ENCODE measurements at regions of chr6 and their contacts with region 1.

Region 1: GRCh38 chr6:4018172-4018905 is 60.6 kb downstream of the FAM217A start:
- DNase-seq: peak; percentile 92 to 99 (median 96)
- ATAC-seq: peak; percentile 70
- H3K4me3 ChIP-seq: peak overlapping the region; percentile 44 to 74
- H3K4me3 Mint-ChIP-seq: peak overlapping the region; percentile 93
- H3K27ac ChIP-seq: peak overlapping the region; percentile 90 to 91
- H3K27ac Mint-ChIP-seq: peak overlapping the region; percentile 99
- H3K4me1 ChIP-seq: peaks cover 57% of the 10 kb centered on the region
- H3K4me1 Mint-ChIP-seq: peaks cover 74% of the 10 kb centered on the region
- H3K27me3 ChIP-seq: no peaks in the 10 kb centered on the region
- H3K27me3 Mint-ChIP-seq: no peaks in the 10 kb centered on the region
- CTCF ChIP-seq: no peak

Region 2: DNA sequence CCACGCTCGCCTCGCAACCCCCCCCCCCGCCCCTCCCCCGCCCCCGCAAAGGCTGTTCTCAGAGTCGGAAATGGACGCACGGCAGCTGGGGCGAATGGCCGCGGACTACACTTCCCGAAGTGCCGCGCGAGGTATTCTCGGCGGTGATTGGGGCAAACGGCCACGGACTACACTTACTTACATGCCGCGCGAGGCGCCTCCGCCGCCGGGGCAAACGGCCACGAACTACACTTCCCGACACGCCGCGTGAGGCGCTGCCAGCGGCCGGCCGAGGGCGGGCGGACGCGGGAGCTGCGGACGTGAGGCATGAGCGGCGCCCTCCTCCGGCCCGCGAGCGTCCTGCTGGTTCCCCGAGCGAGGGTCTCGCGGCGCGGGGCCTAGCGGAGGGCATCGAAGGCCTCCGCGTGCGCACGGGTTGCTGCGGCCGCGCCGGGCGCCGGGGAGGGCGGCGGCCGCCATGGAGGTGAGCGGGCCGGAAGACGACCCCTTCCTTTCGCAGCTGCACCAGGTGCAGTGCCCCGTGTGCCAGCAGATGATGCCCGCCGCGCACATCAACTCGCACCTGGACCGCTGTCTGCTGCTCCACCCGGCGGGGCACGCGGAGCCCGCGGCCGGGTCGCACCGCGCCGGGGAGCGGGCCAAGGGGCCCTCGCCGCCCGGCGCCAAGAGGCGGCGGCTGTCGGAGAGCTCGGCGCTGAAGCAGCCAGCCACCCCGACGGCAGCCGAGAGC is 1253.0 kb before region 1 on chr6 and contains the start of gene WRNIP1:
- CTCF ChIA-PET with region 1: interaction called, 3 read pairs
- POLR2A ChIA-PET with region 1: no interaction called
- intact Hi-C with region 1: loop called in 1 of 2 experiments (anchors 2 kb)
- DNase-seq: peak; percentile 93 to 99 (median 96)
- ATAC-seq: peak; percentile 84
- H3K4me3 ChIP-seq: peak within 1 kb of the TSS; percentile 72 to 76
- H3K4me3 Mint-ChIP-seq: peak within 1 kb of the TSS; percentile 95
- H3K27ac ChIP-seq: peak within 1 kb of the TSS; percentile 88 to 97
- H3K27ac Mint-ChIP-seq: peak within 1 kb of the TSS; percentile 99
- H3K4me1 ChIP-seq: peaks cover 43% of the 10 kb centered on the region
- H3K4me1 Mint-ChIP-seq: peaks cover 47% of the 10 kb centered on the region
- H3K27me3 ChIP-seq: no peaks in the 10 kb centered on the region
- H3K27me3 Mint-ChIP-seq: no peaks in the 10 kb centered on the region
- CTCF ChIP-seq: peak; percentile 35
- total RNA-seq, gene WRNIP1: 21.3 to 23.0 TPM

Region 3: DNA sequence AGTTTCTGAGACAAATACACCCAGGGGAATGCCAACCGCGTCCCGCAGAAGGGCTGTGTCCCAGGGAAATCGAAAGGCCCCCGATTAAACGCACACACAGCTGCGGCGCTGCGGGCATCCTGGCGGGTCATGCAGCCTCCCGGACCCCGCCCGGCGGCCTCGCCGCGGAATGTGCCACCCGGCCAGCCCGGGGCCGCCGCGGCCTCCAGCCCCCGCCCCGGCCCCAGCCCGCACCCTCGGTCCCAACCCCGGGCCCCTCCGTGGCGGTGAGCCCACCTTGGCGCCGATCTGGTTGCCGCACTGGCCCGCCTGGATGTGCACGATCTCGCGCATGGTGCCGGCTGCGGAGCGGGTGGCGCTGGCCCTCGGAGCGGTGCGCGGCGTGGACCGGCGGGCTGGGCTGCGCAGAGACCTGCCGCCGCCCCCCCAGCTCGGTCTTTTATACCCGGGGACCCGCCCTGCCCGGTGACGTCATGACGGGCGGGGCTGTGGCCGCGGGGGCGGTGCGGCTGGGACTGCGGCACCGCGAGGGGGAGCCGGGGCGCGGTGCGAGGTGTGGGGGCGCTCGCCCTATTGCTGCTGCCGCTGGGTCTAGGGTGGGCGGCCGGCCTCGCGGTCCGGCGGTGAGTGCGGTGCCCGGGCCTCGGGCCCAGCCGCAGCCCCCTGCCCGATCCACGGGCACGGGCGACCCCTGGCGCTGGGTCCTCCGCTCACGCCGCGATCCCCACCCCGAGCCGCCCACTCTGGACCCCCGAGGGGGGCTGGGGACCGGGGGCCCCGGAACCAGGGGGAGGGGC is 861.0 kb before region 1 on chr6 and contains the start of gene TUBB2A:
- CTCF ChIA-PET with region 1: interaction called, 3 read pairs
- POLR2A ChIA-PET with region 1: no interaction called
- intact Hi-C with region 1: loop called (anchors 1 kb)
- DNase-seq: peak; percentile 77 to 94 (median 88)
- ATAC-seq: peak; percentile 61
- H3K4me3 ChIP-seq: peak within 1 kb of the TSS; percentile 65
- H3K4me3 Mint-ChIP-seq: peak within 1 kb of the TSS; percentile 92
- H3K27ac ChIP-seq: peak within 1 kb of the TSS; percentile 73 to 84
- H3K27ac Mint-ChIP-seq: peak within 1 kb of the TSS; percentile 91
- H3K4me1 ChIP-seq: peaks cover 29% of the 10 kb centered on the region
- H3K4me1 Mint-ChIP-seq: peaks cover 36% of the 10 kb centered on the region
- H3K27me3 ChIP-seq: no peaks in the 10 kb centered on the region
- H3K27me3 Mint-ChIP-seq: peaks cover 2% of the 10 kb centered on the region
- CTCF ChIP-seq: peak; percentile 65
- total RNA-seq, gene TUBB2A: 61.4 to 63.9 TPM

Region 4: DNA sequence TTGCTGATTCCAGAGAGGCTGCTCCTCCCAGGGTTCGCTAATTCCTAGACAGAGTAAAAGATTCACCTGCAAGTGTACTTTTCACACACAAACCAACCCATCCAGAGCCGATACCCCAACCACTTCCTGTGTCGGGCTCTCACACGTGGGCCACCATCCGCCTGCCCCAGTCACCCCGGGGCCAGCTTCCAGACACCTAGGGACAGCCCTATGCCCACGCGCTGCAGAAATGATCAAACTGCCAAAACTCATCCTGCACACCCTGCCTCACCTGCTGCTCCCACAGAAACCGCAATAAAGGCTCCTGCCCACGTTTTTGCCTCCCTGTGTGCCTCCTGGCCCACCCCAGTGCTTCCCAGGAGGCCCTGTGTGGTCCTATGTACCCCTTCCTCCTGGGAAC is 700.1 kb before region 1 on chr6:
- CTCF ChIA-PET with region 1: no interaction called
- POLR2A ChIA-PET with region 1: no interaction called
- intact Hi-C with region 1: no loop called
- DNase-seq: peak in 8 of 9 experiments; percentile 14 to 69 (median 33)
- ATAC-seq: peak; percentile 71
- H3K4me3 ChIP-seq: no peak overlapping the region
- H3K4me3 Mint-ChIP-seq: peak overlapping the region; percentile 47
- H3K27ac ChIP-seq: no peak overlapping the region
- H3K27ac Mint-ChIP-seq: no peak overlapping the region
- H3K4me1 ChIP-seq: peaks cover 19% of the 10 kb centered on the region
- H3K4me1 Mint-ChIP-seq: peaks cover 23% of the 10 kb centered on the region
- H3K27me3 ChIP-seq: peaks cover 0 to 4% of the 10 kb centered on the region in 2 experiments
- H3K27me3 Mint-ChIP-seq: peaks cover 14% of the 10 kb centered on the region
- CTCF ChIP-seq: no peak

Region 5: DNA sequence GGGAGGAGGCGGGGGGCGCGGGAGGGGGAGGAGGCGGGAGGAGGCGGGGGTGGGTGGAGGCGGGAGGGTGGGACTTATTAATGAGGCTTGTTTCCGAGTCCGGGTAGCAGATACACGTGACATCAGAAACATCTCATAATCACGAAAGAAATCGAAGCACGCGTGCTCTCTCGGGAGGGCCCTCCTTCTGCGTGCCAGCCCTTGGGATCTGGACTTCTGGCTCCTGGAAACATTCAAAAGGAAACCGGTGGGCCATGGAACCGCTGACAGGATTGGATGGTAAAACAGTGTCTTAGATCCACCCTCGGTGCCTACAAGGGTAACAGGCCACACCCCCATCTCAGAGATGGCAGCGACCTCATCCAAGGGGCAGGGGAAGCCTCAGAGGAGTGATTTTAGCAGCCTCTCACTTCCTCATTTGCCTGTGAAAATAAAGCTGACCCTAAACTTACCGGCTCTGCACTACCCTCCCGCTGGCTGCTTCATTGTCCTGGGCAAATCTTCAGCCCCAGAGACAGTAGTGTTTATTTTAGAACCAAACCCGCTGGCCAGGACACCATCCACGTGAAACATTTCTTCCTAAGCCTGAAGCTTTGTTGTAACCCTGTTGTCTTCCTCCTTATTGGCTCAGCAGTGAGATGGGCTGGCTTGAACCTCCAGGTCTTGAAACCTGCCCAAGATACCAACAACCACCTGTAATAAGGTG is 662.1 kb before region 1 on chr6:
- CTCF ChIA-PET with region 1: no interaction called
- POLR2A ChIA-PET with region 1: no interaction called
- intact Hi-C with region 1: loop called (anchors 5 to 10 kb)
- DNase-seq: peak; percentile 35 to 90 (median 66)
- ATAC-seq: peak; percentile 87
- H3K4me3 ChIP-seq: peak overlapping the region; percentile 51 to 58
- H3K4me3 Mint-ChIP-seq: peak overlapping the region; percentile 81
- H3K27ac ChIP-seq: peak overlapping the region; percentile 48 to 79
- H3K27ac Mint-ChIP-seq: peak overlapping the region; percentile 90
- H3K4me1 ChIP-seq: peaks cover 27% of the 10 kb centered on the region
- H3K4me1 Mint-ChIP-seq: peaks cover 33% of the 10 kb centered on the region
- H3K27me3 ChIP-seq: no peaks in the 10 kb centered on the region
- H3K27me3 Mint-ChIP-seq: no peaks in the 10 kb centered on the region
- CTCF ChIP-seq: no peak

Region 6: DNA sequence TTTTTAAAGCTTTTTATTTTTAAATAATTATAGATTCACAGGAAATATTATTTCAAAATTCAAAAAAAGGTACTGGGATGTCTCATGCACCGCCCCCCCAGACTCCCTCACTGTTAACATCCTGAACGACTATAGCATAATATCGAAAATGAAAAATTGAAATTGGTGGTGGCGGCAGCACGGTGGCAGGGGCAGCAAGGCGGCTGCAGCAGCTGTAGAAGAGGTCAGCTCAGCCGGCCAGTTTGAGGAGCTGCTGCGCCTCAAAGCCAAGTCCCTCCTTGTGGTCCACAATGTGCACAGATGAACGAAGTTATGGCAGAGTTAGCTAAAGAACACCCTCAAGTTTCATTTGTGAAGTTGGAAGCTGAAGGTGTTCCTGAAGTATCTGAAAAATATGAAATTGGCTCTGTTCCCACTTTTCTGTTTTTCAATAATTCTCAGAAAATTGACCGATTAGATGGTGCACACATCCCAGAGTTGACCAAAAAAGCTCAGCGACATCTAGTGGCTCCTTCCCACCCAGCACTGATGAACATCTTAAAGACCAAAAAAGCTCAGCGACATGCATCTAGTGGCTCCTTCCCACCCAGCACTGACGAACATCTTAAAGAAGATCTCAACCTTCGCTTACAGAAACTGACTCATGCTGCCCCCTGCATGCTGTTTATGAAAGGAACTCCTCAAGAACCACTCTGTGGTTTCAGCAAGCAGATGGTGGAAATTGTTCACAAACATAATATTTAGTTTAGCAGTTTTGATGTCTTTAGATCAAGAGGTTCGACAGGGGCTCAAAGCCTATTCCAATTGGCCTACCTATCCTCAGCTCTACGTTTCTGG is 40.2 kb before region 1 on chr6:
- CTCF ChIA-PET with region 1: interaction called, 10 read pairs
- POLR2A ChIA-PET with region 1: interaction called, 9 read pairs
- intact Hi-C with region 1: loop called in 1 of 2 experiments (anchors 5 kb)
- DNase-seq: peak; percentile 10 to 78 (median 44)
- ATAC-seq: peak; percentile 99
- H3K4me3 ChIP-seq: peak overlapping the region in 1 of 2 experiments; percentile 6
- H3K4me3 Mint-ChIP-seq: peak overlapping the region; percentile 47
- H3K27ac ChIP-seq: no peak overlapping the region
- H3K27ac Mint-ChIP-seq: no peak overlapping the region
- H3K4me1 ChIP-seq: peaks cover 7% of the 10 kb centered on the region
- H3K4me1 Mint-ChIP-seq: peaks cover 11% of the 10 kb centered on the region
- H3K27me3 ChIP-seq: no peaks in the 10 kb centered on the region
- H3K27me3 Mint-ChIP-seq: no peaks in the 10 kb centered on the region
- CTCF ChIP-seq: peak; percentile 64

Region 7: GRCh38 chr6:4775584-4776494 is 757.5 kb after region 1 on chr6 and contains the start of gene CDYL:
- CTCF ChIA-PET with region 1: no interaction called
- POLR2A ChIA-PET with region 1: no interaction called
- intact Hi-C with region 1: loop called (anchors 5 to 10 kb)
- DNase-seq: peak; percentile 76 to 94 (median 89)
- ATAC-seq: peak; percentile 75
- H3K4me3 ChIP-seq: peak within 1 kb of the TSS; percentile 63 to 64
- H3K4me3 Mint-ChIP-seq: peak within 1 kb of the TSS; percentile 91
- H3K27ac ChIP-seq: peak within 1 kb of the TSS; percentile 29 to 38
- H3K27ac Mint-ChIP-seq: peak within 1 kb of the TSS; percentile 91
- H3K4me1 ChIP-seq: peaks cover 25% of the 10 kb centered on the region
- H3K4me1 Mint-ChIP-seq: peaks cover 44% of the 10 kb centered on the region
- H3K27me3 ChIP-seq: no peaks in the 10 kb centered on the region
- H3K27me3 Mint-ChIP-seq: no peaks in the 10 kb centered on the region
- CTCF ChIP-seq: no peak
- total RNA-seq, gene CDYL: 35.9 to 36.3 TPM